HepG2 (cell line): ENCODE measurements at regions of chr1 and their contacts with region 1.

Region 1: GRCh38 chr1:93078986-93079654 is at the start of gene MTF2:
- DNase-seq: peak; percentile 90
- ATAC-seq: peak; percentile 91
- H3K4me3 ChIP-seq: peak within 1 kb of the TSS; percentile 71 to 85 (median 80)
- H3K27ac ChIP-seq: peak within 1 kb of the TSS; percentile 82
- H3K4me1 ChIP-seq: peaks cover 43% of the 10 kb centered on the region
- H3K27me3 ChIP-seq: no peaks in the 10 kb centered on the region; a peak in 1 of 5 replicates
- CTCF ChIP-seq: peak; percentile 49
- EP300 ChIP-seq: peak; percentile 65 to 79; a peak in 2 of 4 replicates
- POLR2A ChIP-seq: peak; percentile 98 to 99
- RAD21 ChIP-seq: peak; percentile 64
- total RNA-seq, gene MTF2: 53.9 and 75.1 TPM in 2 replicates

Region 2: GRCh38 chr1:91404151-91405012 is 1674.7 kb before region 1 on chr1 and contains the start of gene HFM1:
- CTCF ChIA-PET with region 1: no interaction called
- POLR2A ChIA-PET with region 1: no interaction called
- in situ Hi-C with region 1: no loop called
- intact Hi-C with region 1: loop called (anchors 5 kb)
- DNase-seq: peak; percentile 59
- ATAC-seq: peak; percentile 99
- H3K4me3 ChIP-seq: peak within 1 kb of the TSS; percentile 60 to 76 (median 70)
- H3K27ac ChIP-seq: no peak within 1 kb of the TSS
- H3K4me1 ChIP-seq: no peaks in the 10 kb centered on the region
- H3K27me3 ChIP-seq: peaks cover 0 to 10% of the 10 kb centered on the region in 2 experiments; a peak in 1 of 5 replicates
- CTCF ChIP-seq: peak; percentile 47
- EP300 ChIP-seq: no peak
- POLR2A ChIP-seq: no peak
- RAD21 ChIP-seq: no peak
- total RNA-seq, gene HFM1: 0.29 and 1.4 TPM in 2 replicates

Region 3: GRCh38 chr1:92831762-92832536 is 247.2 kb before region 1 on chr1 and contains the start of gene RPL5:
- CTCF ChIA-PET with region 1: no interaction called
- POLR2A ChIA-PET with region 1: interaction called, 12 read pairs
- in situ Hi-C with region 1: no loop called
- intact Hi-C with region 1: no loop called
- DNase-seq: peak; percentile 94
- ATAC-seq: peak; percentile 94
- H3K4me3 ChIP-seq: peak within 1 kb of the TSS; percentile 94 to 100 (median 96)
- H3K27ac ChIP-seq: peak within 1 kb of the TSS; percentile 87
- H3K4me1 ChIP-seq: peaks cover 46% of the 10 kb centered on the region
- H3K27me3 ChIP-seq: no peaks in the 10 kb centered on the region; a peak in 1 of 5 replicates
- CTCF ChIP-seq: peak; percentile 97
- EP300 ChIP-seq: no peak; a peak in 1 of 4 replicates
- POLR2A ChIP-seq: peak; percentile 99 to 100
- RAD21 ChIP-seq: peak; percentile 64; the same call in 1 of the 2 replicates
- total RNA-seq, gene RPL5: 2,304 and 2,854 TPM in 2 replicates

Region 4: GRCh38 chr1:93061895-93062792 is 17.0 kb before region 1 on chr1:
- CTCF ChIA-PET with region 1: no interaction called
- POLR2A ChIA-PET with region 1: interaction called, 10 read pairs
- in situ Hi-C with region 1: no loop called
- intact Hi-C with region 1: no loop called
- DNase-seq: peak; percentile 54
- ATAC-seq: peak; percentile 88
- H3K4me3 ChIP-seq: no peak overlapping the region
- H3K27ac ChIP-seq: no peak overlapping the region
- H3K4me1 ChIP-seq: no peaks in the 10 kb centered on the region
- H3K27me3 ChIP-seq: no peaks in the 10 kb centered on the region; a peak in 1 of 5 replicates
- CTCF ChIP-seq: peak; percentile 82
- EP300 ChIP-seq: no peak
- POLR2A ChIP-seq: no peak
- RAD21 ChIP-seq: peak; percentile 72

Region 5: GRCh38 chr1:93123201-93123783 is 44.2 kb after region 1 on chr1:
- CTCF ChIA-PET with region 1: no interaction called
- POLR2A ChIA-PET with region 1: no interaction called
- in situ Hi-C with region 1: no loop called
- intact Hi-C with region 1: no loop called
- DNase-seq: no peak
- ATAC-seq: no peak
- H3K4me3 ChIP-seq: no peak overlapping the region
- H3K27ac ChIP-seq: no peak overlapping the region
- H3K4me1 ChIP-seq: no peaks in the 10 kb centered on the region
- H3K27me3 ChIP-seq: no peaks in the 10 kb centered on the region
- CTCF ChIP-seq: no peak
- EP300 ChIP-seq: no peak
- POLR2A ChIP-seq: no peak
- RAD21 ChIP-seq: no peak

Region 6: DNA sequence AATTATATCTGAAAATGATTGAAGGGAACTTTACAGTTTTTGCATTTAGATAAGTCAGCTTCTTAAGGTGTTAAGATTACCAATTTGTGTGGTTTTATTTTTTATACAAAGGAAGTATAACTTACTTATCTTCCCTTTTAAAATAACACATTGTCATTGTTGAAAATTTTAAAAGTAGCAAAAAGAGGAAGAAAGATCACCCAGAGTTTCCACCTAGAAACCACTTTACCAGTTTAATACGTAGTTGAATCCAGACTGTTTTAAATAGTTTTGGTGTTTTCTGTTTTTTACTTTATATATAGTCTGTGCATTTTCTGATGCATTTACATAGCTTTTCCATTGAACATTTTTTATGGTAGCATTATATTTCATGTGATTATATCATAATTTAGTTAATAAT is 107.5 kb after region 1 on chr1:
- CTCF ChIA-PET with region 1: no interaction called
- POLR2A ChIA-PET with region 1: no interaction called
- in situ Hi-C with region 1: no loop called
- intact Hi-C with region 1: no loop called
- DNase-seq: no peak
- ATAC-seq: no peak
- H3K4me3 ChIP-seq: no peak overlapping the region
- H3K27ac ChIP-seq: no peak overlapping the region
- H3K4me1 ChIP-seq: peaks cover 26% of the 10 kb centered on the region
- H3K27me3 ChIP-seq: no peaks in the 10 kb centered on the region
- CTCF ChIP-seq: no peak
- EP300 ChIP-seq: no peak
- POLR2A ChIP-seq: no peak
- RAD21 ChIP-seq: no peak

Region 7: DNA sequence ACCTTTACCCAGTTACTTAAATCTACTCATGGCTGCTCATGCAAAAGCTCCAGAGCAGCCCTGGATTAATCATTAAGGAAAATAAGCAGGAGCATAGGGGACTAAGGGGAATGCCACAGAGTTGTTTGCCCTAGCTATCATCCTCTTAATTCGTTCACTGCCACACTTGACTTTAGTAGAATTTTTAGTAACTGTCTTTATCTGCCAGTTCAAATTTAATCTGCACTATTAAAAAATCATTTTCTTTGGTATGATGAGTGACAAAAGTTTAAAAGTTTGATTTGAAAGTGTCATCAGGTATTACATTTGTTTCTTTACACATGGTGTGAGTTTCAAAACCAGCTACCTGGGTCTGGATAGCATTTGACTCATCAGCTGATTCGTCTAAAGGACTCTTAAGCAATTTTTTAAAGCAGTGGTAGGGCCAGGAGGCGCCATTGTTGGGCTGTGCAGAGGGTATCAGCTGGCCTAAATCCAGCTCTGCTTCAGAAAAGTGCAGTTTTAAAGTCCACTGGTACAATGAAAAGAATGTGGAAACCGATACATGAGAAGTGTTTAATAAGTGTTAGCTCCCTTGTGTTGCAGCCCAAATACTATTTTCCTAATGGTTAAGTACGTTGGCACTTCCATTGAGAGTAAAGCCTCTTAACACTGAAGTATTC is 196.6 kb after region 1 on chr1:
- CTCF ChIA-PET with region 1: no interaction called
- POLR2A ChIA-PET with region 1: interaction called, 18 read pairs
- in situ Hi-C with region 1: no loop called
- intact Hi-C with region 1: no loop called
- DNase-seq: peak; percentile 86
- ATAC-seq: peak; percentile 99
- H3K4me3 ChIP-seq: peak overlapping the region; percentile 22 to 56 (median 46); a peak in 5 of 6 replicates
- H3K27ac ChIP-seq: peak overlapping the region; percentile 94
- H3K4me1 ChIP-seq: peaks cover 37% of the 10 kb centered on the region
- H3K27me3 ChIP-seq: no peaks in the 10 kb centered on the region
- CTCF ChIP-seq: no peak
- EP300 ChIP-seq: peak in 1 of 2 experiments; percentile 34; a peak in 1 of 4 replicates
- POLR2A ChIP-seq: no peak
- RAD21 ChIP-seq: no peak

Region 8: DNA sequence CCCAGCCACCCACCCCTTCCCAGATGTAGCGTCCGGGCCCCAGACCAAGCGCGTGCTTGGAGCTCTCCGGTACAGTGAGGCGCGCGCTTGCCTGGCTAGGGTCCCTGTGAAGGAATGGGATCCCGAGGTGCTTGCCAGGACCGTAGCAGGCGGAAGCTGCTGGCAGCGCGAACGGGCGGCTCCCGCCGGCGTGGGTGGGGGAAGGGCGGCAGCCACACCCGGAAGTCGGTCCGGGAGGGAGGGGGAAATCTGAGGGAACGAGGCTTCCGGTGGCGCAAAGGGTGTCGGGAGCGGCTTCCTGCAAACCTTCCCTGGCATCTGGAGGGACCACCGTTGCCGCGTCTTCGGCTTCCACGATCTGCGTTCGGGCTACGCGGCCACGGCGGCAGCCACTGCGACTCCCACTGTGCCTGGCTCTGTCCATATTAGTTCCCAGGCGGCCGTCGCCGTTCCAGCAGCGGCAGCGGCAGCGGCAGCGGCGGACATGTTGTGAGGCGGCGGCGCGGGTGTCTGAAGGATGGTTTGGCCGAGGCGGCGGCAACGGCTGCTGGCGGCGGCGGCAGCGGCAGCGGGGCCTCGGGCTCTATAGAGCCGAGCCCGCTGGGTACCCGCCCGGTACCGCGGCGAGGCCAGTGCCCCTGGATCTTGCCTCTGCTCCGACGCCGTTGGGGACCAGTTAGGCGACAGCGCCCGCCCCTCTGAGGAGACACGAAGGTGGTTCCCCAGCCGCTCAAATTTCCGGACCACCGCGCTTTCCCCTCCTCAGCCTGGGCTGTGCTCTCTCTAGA is 266.7 kb after region 1 on chr1 and contains the start of gene DR1:
- CTCF ChIA-PET with region 1: no interaction called
- POLR2A ChIA-PET with region 1: interaction called, 5 read pairs
- in situ Hi-C with region 1: no loop called
- intact Hi-C with region 1: loop called (anchors 5 kb)
- DNase-seq: peak; percentile 85
- ATAC-seq: peak; percentile 94
- H3K4me3 ChIP-seq: peak within 1 kb of the TSS; percentile 81 to 99 (median 93)
- H3K27ac ChIP-seq: peak within 1 kb of the TSS; percentile 94
- H3K4me1 ChIP-seq: peaks cover 35% of the 10 kb centered on the region
- H3K27me3 ChIP-seq: no peaks in the 10 kb centered on the region; a peak in 1 of 5 replicates
- CTCF ChIP-seq: no peak; the same call in 1 of the 2 replicates
- EP300 ChIP-seq: peak in 1 of 2 experiments; percentile 70; a peak in 2 of 4 replicates
- POLR2A ChIP-seq: peak; percentile 89 to 92
- RAD21 ChIP-seq: peak; percentile 45; the same call in 1 of the 2 replicates
- total RNA-seq, gene DR1: 42.3 and 54.7 TPM in 2 replicates